ENCODE measurements at regions of chr1 and their contacts with region 1.

Region 1: GRCh38 chr1:58783993-58784757 is at the start of gene JUN:
- DNase-seq: peak; percentile 98
- ATAC-seq: peak; percentile 86
- H3K4me3 ChIP-seq: peak within 1 kb of the TSS; percentile 82 to 90 (median 87)
- H3K27ac ChIP-seq: peak within 1 kb of the TSS; percentile 86
- H3K4me1 ChIP-seq: peaks cover 36% of the 10 kb centered on the region
- H3K27me3 ChIP-seq: no peaks in the 10 kb centered on the region; a peak in 1 of 5 replicates
- CTCF ChIP-seq: 0 out of 2 replicates have a peak, but pooled peaks have one; percentile 19
- EP300 ChIP-seq: peak; percentile 47 to 89; a peak in 3 of 4 replicates
- POLR2A ChIP-seq: peak; percentile 99 to 100
- RAD21 ChIP-seq: no peak
- total RNA-seq, gene JUN: 13.3 and 22.3 TPM in 2 replicates

Region 2: DNA sequence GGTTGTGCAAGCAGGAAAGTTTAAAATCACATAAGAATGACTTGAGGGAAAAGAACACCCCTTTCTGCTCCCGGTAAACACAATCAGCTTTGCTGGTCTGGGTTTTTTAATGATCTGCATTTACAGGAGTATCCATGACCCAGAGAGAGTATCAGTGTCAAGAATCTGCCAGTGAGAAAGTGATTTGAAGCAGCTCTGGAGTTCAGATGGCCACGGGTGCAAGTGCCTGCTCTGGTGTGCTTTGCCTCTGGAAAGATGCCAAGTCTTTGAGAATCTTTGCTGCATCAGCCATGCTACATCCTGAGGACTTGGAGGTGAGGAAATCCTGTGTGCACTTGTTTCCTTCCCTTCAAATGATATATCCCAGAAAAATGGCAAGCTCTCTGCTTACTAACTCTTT is 65.7 kb before region 1 on chr1:
- CTCF ChIA-PET with region 1: no interaction called
- POLR2A ChIA-PET with region 1: no interaction called
- in situ Hi-C with region 1: no loop called
- intact Hi-C with region 1: no loop called
- DNase-seq: no peak
- ATAC-seq: no peak
- H3K4me3 ChIP-seq: no peak overlapping the region
- H3K27ac ChIP-seq: no peak overlapping the region
- H3K4me1 ChIP-seq: peaks cover 12% of the 10 kb centered on the region
- H3K27me3 ChIP-seq: peaks cover 0 to 8% of the 10 kb centered on the region in 2 experiments; a peak in 1 of 5 replicates
- CTCF ChIP-seq: no peak
- EP300 ChIP-seq: no peak
- POLR2A ChIP-seq: no peak
- RAD21 ChIP-seq: no peak

Region 3: GRCh38 chr1:58754683-58755467 is 29.3 kb before region 1 on chr1:
- CTCF ChIA-PET with region 1: no interaction called
- POLR2A ChIA-PET with region 1: interaction called, 19 read pairs
- in situ Hi-C with region 1: no loop called
- intact Hi-C with region 1: no loop called
- DNase-seq: no peak
- ATAC-seq: no peak
- H3K4me3 ChIP-seq: no peak overlapping the region
- H3K27ac ChIP-seq: peak overlapping the region; percentile 63
- H3K4me1 ChIP-seq: peaks cover 85% of the 10 kb centered on the region
- H3K27me3 ChIP-seq: no peaks in the 10 kb centered on the region
- CTCF ChIP-seq: no peak
- EP300 ChIP-seq: no peak
- POLR2A ChIP-seq: peak in 1 of 2 experiments; percentile 5; a peak in 1 of 4 replicates
- RAD21 ChIP-seq: no peak

Region 4: DNA sequence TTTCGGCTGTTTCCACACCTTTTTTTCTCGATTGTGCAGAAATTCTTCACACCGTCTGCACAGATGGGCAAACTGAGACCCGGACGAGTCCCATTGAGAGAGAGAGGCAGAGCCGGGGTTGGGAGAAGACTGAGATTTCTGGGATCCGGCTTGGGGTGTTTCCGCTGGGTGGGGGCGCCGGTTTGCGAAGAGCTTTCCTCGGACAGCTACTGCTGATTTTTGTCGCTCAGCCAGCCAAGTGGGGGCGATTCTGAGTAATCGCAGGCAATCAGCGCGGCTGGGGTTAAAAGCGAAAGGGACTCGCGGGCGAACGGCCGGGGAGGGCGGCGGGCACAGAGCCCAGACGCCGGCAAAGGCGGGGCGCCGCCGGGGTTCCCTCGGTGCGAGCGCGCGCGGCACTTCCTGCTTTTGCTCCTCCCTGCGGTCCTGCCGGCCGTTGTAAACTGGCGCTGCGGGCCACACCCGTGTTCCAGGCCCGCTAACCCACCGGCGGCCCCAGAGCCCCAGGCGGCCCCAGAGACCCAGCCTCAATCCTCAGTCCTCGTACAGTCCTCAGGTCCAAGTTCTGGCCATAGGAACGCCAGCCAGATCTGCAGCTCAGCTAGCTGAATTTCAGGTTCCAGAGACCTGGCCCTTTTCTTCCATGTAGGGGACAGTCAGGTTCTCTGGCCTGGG is 32.0 kb after region 1 on chr1:
- CTCF ChIA-PET with region 1: no interaction called
- POLR2A ChIA-PET with region 1: interaction called, 11 read pairs
- in situ Hi-C with region 1: no loop called
- intact Hi-C with region 1: no loop called
- DNase-seq: peak; percentile 63
- ATAC-seq: peak; percentile 90
- H3K4me3 ChIP-seq: peak overlapping the region; percentile 68 to 88 (median 80)
- H3K27ac ChIP-seq: peak overlapping the region; percentile 63
- H3K4me1 ChIP-seq: peaks cover 68% of the 10 kb centered on the region
- H3K27me3 ChIP-seq: peaks cover 0 to under 1% of the 10 kb centered on the region in 2 experiments; a peak in 1 of 5 replicates
- CTCF ChIP-seq: peak; percentile 27; the same call in 1 of the 2 replicates
- EP300 ChIP-seq: no peak
- POLR2A ChIP-seq: peak in 1 of 2 experiments; percentile 68; a peak in 2 of 4 replicates
- RAD21 ChIP-seq: peak; percentile 51; the same call in 1 of the 2 replicates

Region 5: GRCh38 chr1:59052166-59052590 is 268.0 kb after region 1 on chr1:
- CTCF ChIA-PET with region 1: no interaction called
- POLR2A ChIA-PET with region 1: interaction called, 4 read pairs
- in situ Hi-C with region 1: loop called (anchors 10 kb)
- intact Hi-C with region 1: loop called (anchors 1 kb)
- DNase-seq: peak; percentile 97
- ATAC-seq: peak; percentile 99
- H3K4me3 ChIP-seq: no peak overlapping the region
- H3K27ac ChIP-seq: no peak overlapping the region
- H3K4me1 ChIP-seq: peaks cover 25% of the 10 kb centered on the region
- H3K27me3 ChIP-seq: peaks cover 0 to 41% of the 10 kb centered on the region in 2 experiments; a peak in 4 of 5 replicates
- CTCF ChIP-seq: peak; percentile 12; the same call in 1 of the 2 replicates
- EP300 ChIP-seq: peak; percentile 65 to 93
- POLR2A ChIP-seq: no peak
- RAD21 ChIP-seq: no peak

Region 6: GRCh38 chr1:59214248-59215208 is 430.4 kb after region 1 on chr1:
- CTCF ChIA-PET with region 1: no interaction called
- POLR2A ChIA-PET with region 1: interaction called, 4 read pairs
- in situ Hi-C with region 1: no loop called
- intact Hi-C with region 1: loop called (anchors 10 kb)
- DNase-seq: peak; percentile 97
- ATAC-seq: peak; percentile 90
- H3K4me3 ChIP-seq: peak overlapping the region in 1 of 3 experiments; percentile 7; a peak in 1 of 6 replicates
- H3K27ac ChIP-seq: peak overlapping the region; percentile 82
- H3K4me1 ChIP-seq: peaks cover 64% of the 10 kb centered on the region
- H3K27me3 ChIP-seq: no peaks in the 10 kb centered on the region
- CTCF ChIP-seq: no peak
- EP300 ChIP-seq: peak; percentile 61 to 95; a peak in 3 of 4 replicates
- POLR2A ChIP-seq: no peak
- RAD21 ChIP-seq: 0 out of 2 replicates have a peak, but pooled peaks have one; percentile 13

Region 7: DNA sequence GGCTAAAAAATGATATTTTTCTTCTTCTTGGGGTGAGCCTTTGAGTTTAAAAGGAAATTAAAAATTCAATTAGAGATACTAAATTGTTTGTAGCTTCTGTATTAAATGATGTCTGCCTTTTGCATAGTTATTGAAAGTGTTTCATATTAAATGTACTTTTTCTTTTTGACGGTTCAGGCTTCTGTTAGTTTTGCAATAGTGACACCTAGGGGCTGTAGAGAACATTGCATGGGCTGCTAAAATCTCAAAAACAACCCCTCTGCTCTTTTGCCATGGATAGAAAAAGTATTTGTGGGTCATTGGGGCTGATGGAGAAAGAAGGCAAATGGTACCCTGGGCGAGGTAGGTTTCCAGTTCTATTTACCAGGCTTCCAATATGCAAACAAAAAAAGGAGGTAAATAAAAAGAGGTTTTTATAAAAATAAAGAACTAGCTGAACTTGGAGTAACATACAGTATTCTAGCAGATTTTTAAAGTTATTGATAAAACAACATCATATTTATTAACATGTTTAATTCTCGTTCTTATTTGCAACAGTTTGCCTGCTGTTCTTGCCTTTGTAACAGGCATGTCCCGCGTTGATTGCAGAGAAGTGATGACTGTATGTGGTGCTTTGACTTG is 915.2 kb after region 1 on chr1:
- CTCF ChIA-PET with region 1: no interaction called
- POLR2A ChIA-PET with region 1: interaction called, 13 read pairs
- in situ Hi-C with region 1: no loop called
- intact Hi-C with region 1: loop called (anchors 10 kb)
- DNase-seq: peak; percentile 48
- ATAC-seq: no peak
- H3K4me3 ChIP-seq: no peak overlapping the region
- H3K27ac ChIP-seq: peak overlapping the region; percentile 44
- H3K4me1 ChIP-seq: peaks cover 37% of the 10 kb centered on the region
- H3K27me3 ChIP-seq: no peaks in the 10 kb centered on the region
- CTCF ChIP-seq: peak; percentile 79
- EP300 ChIP-seq: no peak
- POLR2A ChIP-seq: no peak
- RAD21 ChIP-seq: peak; percentile 72

Measured in HepG2 (cell line).